ENCODE measurements at regions of chr1 and their contacts with region 1.

Region 1: DNA sequence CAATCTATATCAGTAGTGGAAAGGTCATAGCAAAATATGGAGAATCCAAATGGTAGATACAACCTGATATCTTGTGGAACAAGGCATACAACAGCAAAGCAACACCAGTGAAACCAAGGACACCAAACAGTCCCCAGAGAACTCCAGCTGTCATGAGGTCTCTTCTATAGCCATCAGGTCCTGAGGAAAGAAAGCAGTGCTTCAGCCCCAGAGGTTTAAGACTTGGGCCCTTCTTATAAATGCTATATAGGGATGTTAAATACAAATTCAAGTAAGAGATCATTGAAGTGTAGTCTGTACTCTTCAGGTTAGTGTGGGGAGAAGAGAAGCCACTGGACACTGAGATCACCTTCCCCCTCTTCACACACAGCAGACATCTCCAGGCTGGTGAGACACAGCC is 10.1 kb downstream of the FCRL2 start:
- DNase-seq: no peak
- H3K4me3 ChIP-seq: no peak overlapping the region
- H3K27ac ChIP-seq: no peak overlapping the region
- H3K4me1 ChIP-seq: peaks cover 10% of the 10 kb centered on the region
- H3K27me3 ChIP-seq: no peaks in the 10 kb centered on the region
- CTCF ChIP-seq: no peak

Region 2: GRCh38 chr1:157781048-157781447 is 14.3 kb after region 1 on chr1:
- CTCF ChIA-PET with region 1: no interaction called
- POLR2A ChIA-PET with region 1: interaction called, 13 read pairs
- intact Hi-C with region 1: no loop called
- DNase-seq: no peak
- H3K4me3 ChIP-seq: no peak overlapping the region
- H3K27ac ChIP-seq: no peak overlapping the region
- H3K4me1 ChIP-seq: peaks cover 14% of the 10 kb centered on the region
- H3K27me3 ChIP-seq: no peaks in the 10 kb centered on the region
- CTCF ChIP-seq: no peak

Measured in A673 (cell line).